K562 (cell line): ENCODE measurements at regions of chr1 and their contacts with region 1.

Region 1: DNA sequence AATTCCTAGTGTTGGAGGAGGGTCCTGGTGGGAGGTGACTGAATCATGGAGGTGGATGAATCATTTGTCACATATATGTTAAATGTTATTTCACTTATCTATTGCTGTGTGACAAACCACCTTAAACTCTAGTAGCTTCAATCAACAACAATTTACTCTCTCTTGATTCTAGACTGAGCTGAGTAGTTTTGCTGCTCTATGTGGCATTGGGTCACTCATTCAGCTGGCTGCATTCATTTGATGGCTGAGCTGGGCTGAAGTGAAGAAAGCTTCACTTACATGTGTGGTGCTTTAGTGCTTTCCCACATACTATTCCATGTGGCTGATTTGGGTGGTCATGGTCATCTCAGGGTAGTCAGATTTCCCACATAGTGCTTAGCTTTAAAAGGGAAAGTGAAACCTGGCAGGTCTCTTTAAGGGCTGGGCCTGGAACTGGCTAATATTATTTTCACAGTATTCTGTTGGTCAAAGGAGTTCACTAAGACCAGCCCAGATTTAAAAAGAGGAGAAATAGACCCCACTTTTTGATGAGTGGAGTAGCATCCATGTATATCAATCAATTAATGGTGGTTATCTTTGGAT is 10.5 kb downstream of the DNAH14 start:
- DNase-seq: no peak
- ATAC-seq: peak; percentile 64
- H3K4me3 ChIP-seq: no peak overlapping the region
- H3K27ac ChIP-seq: no peak overlapping the region
- H3K4me1 ChIP-seq: no peaks in the 10 kb centered on the region
- H3K27me3 ChIP-seq: no peaks in the 10 kb centered on the region
- CTCF ChIP-seq: no peak
- EP300 ChIP-seq: no peak
- POLR2A ChIP-seq: no peak
- RAD21 ChIP-seq: no peak

Region 2: DNA sequence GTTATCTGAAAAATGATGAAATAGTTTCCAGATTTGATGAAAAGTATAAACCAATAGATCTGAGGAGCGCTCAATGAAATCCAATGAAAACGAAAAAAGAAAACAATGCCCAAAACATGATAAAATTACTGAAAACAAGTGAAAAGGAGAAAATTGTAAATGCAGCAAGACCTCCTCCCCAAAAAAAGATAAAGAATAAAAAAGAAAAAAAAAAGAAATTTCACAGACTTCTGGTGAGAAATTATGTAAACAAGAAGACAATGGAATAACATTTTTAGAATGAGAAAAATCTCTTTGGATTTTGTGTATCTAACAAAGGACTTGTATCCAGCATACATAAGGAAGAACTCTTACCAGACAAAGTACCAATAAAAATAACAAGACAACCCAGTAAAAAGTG is 123.8 kb after region 1 on chr1:
- CTCF ChIA-PET with region 1: no interaction called
- POLR2A ChIA-PET with region 1: no interaction called
- in situ Hi-C with region 1: loop called (anchors 5 kb)
- intact Hi-C with region 1: no loop called
- DNase-seq: no peak
- ATAC-seq: no peak
- H3K4me3 ChIP-seq: no peak overlapping the region
- H3K27ac ChIP-seq: no peak overlapping the region
- H3K4me1 ChIP-seq: no peaks in the 10 kb centered on the region
- H3K27me3 ChIP-seq: no peaks in the 10 kb centered on the region
- CTCF ChIP-seq: no peak
- EP300 ChIP-seq: no peak
- POLR2A ChIP-seq: no peak
- RAD21 ChIP-seq: no peak